Transverse colon (tissue), 4 donors: ENCODE measurements at regions of chr11 and their contacts with region 1.

Region 1: DNA sequence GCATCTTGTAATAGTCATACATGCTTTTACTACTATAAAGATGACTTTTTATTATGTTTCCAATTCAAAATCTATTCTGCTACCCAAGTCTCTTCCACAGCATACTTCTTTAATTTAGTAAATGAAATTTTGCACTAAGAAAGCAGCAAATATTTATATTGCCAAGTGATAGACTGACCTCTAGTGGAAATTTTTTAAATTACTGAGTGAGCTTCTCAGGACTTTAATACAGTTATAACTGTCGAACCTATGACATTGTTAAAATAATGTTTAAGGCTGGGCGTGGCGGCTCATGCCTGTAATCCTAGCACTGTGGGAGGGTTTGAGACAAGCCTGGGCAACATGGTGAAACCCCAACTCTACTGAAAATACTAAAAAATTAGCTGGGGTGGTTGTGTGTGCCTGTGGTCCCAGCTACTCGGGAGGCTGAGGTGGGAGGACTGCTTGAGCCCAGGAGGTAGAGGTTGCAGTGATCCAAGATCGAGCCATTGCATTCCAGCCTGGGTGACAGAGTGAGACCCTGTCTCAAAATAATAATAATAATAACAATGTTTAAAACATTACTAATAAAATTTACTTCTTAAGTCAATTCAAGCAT is 27.3 kb downstream of the STK33 start:
- DNase-seq: peak; percentile 12
- H3K4me3 ChIP-seq: no peak overlapping the region
- H3K27ac ChIP-seq: no peak overlapping the region
- H3K4me1 ChIP-seq: no peaks in the 10 kb centered on the region
- H3K27me3 ChIP-seq: no peaks in the 10 kb centered on the region
- CTCF ChIP-seq: peak; percentile 62 to 78 (median 67)
- EP300 ChIP-seq: no peak
- POLR2A ChIP-seq: no peak

Region 2: DNA sequence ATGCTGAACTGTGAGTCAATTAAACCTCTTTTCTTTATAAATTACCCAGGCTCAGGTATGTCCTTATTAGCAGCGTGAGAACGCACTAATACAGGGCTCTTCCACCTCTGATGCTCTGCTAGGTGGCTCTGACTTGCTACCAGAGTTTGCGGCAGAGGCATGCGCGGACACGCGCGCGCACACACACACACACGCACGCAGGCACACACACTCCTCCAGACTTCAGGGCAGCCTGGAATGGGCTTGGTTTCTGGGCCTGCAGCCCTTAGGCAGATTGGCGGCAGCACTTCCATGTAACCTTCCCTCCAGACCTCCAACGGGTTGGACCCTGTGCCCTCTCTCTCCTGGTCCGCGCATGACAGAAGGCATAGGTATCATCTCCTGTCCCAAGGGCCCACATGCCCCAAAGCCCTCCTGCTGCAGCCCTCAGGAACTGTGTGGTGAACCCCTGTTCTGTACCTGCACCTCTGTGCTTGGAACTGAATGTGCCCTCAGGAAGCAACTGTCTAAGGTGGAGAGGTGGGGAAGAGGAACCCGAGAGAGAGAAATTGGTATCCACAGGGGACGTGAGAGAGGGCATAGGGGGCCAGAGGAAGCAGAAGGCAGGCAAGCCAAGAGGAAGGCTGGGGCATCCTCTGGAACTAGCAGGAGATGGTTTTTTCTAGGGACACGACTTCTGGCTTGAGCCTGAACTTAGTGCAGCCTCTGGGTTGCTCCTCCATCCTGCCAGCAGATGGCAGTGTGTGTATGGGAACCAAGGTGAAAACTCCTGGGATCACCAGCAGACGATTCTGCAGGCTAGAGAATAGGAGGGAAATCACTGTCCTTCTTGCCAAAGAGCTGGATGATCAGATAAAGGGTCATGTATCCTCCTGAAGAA is 374.5 kb before region 1 on chr11:
- in situ Hi-C with region 1: loop called in 1 of 4 experiments (anchors 10 kb)
- intact Hi-C with region 1: no loop called
- DNase-seq: peak; percentile 72
- H3K4me3 ChIP-seq: no peak overlapping the region
- H3K27ac ChIP-seq: no peak overlapping the region
- H3K4me1 ChIP-seq: no peaks in the 10 kb centered on the region
- H3K27me3 ChIP-seq: peaks cover 7% of the 10 kb centered on the region
- CTCF ChIP-seq: peak; percentile 60 to 81 (median 72)
- EP300 ChIP-seq: no peak
- POLR2A ChIP-seq: no peak

Region 3: DNA sequence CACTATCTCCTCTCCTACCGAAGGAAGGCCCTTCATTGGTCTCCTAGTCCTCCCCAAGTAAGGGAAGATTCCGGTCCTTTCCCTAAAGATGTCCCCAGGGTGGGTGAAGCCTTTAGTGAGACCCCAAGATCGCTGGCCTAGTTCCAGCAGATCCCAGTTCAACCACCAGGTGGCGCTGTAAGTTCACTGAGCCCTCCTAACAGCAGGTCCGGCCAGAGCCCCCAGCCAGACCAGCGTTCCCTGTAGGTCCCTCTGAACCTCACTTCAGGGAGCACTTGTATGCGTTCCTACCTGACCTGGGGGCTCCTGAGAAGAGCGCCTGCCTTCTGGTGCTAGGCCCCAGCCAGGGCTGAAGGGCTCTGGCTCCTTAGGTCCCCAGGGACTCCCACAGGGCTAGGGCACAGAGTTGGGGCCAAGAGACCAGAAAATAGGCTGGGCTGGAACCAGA is 341.1 kb before region 1 on chr11:
- in situ Hi-C with region 1: loop called (anchors 10 kb)
- intact Hi-C with region 1: loop called (anchors 2 kb)
- DNase-seq: peak; percentile 73
- H3K4me3 ChIP-seq: no peak overlapping the region
- H3K27ac ChIP-seq: no peak overlapping the region
- H3K4me1 ChIP-seq: peaks cover 0 to 33% (median 18%) of the 10 kb centered on the region in 4 donors
- H3K27me3 ChIP-seq: no peaks in the 10 kb centered on the region
- CTCF ChIP-seq: peak; percentile 91 to 96 (median 93)
- EP300 ChIP-seq: no peak
- POLR2A ChIP-seq: no peak

Region 4: DNA sequence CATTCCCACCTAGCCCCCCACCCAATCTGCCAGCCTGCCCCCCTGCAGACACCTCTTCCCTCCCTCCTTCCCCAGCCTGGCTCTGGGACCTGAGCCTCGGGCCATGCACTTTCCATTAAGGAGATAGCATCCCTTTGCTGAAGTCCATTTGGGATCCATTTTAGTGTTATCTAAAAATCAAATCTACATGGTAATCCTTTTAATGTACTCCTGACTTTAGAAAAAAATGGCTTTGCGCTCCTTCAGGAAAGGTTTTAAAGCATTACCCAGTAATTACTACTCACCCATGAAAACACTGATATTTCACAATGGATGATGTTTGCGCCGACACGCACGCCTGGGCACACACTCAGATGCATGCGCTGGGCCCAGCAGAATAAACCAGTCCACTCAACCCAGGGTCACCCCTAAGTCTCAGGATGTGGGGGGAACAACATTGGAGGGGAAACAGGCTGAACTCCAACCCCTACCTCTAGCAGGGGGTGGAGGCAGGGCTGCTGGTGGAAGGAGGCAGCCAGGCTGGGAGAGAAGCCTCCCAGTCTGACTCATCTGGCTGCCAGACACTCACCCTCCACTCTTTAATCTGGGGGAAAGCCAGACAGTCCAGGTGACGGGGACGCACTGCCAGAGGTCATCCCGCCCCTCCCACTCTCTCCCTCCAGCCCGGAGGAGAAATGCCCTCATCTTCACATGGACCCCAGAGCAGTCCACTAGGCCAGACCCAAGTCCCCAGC is 332.9 kb before region 1 on chr11:
- in situ Hi-C with region 1: loop called (anchors 10 kb)
- intact Hi-C with region 1: no loop called
- DNase-seq: no peak
- H3K4me3 ChIP-seq: no peak overlapping the region
- H3K27ac ChIP-seq: no peak overlapping the region
- H3K4me1 ChIP-seq: peaks cover 0 to 7% (median 2%) of the 10 kb centered on the region in 4 donors
- H3K27me3 ChIP-seq: no peaks in the 10 kb centered on the region
- CTCF ChIP-seq: no peak
- EP300 ChIP-seq: no peak
- POLR2A ChIP-seq: no peak

Region 5: DNA sequence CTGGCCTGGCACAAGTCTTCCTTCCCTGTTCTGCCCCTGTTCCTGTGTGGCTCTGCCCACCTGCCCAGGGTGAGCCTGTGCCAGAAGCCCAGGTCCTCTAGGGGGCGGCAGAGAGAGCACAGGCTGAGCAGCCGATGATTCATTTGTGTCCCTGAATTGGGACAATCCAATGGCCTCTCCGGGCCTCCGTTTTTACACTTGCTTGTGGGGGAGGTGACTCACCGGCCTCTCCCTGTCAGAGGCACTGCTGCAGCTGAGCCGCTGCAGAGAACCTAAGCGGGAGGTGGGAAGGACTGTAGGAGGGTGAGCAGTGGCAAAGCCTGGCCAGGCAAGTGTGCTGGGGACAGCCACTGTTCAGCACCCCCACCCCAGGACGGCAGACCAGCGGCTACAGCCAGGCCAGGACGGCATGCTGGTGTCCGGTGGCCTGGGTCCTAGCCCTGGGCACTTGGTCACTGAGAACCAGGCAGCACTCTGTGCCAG is 237.8 kb before region 1 on chr11:
- in situ Hi-C with region 1: loop called in 2 of 4 experiments (anchors 10 to 25 kb)
- intact Hi-C with region 1: no loop called
- DNase-seq: peak; percentile 85
- H3K4me3 ChIP-seq: no peak overlapping the region
- H3K27ac ChIP-seq: no peak overlapping the region
- H3K4me1 ChIP-seq: peaks cover 0 to 3% (median 0%) of the 10 kb centered on the region in 4 donors
- H3K27me3 ChIP-seq: no peaks in the 10 kb centered on the region
- CTCF ChIP-seq: peak; percentile 51 to 76 (median 70)
- EP300 ChIP-seq: no peak
- POLR2A ChIP-seq: no peak

Region 6: GRCh38 chr11:8338138-8338537 is 228.6 kb before region 1 on chr11:
- in situ Hi-C with region 1: loop called in 2 of 4 experiments (anchors 10 to 25 kb)
- intact Hi-C with region 1: no loop called
- DNase-seq: peak; percentile 61
- H3K4me3 ChIP-seq: no peak overlapping the region
- H3K27ac ChIP-seq: no peak overlapping the region
- H3K4me1 ChIP-seq: no peaks in the 10 kb centered on the region
- H3K27me3 ChIP-seq: peaks cover 8% of the 10 kb centered on the region
- CTCF ChIP-seq: peak; percentile 47 to 66 (median 59)
- EP300 ChIP-seq: no peak
- POLR2A ChIP-seq: no peak

Region 7: GRCh38 chr11:8354622-8355415 is 211.9 kb before region 1 on chr11:
- in situ Hi-C with region 1: loop called in 1 of 4 experiments (anchors 25 kb)
- intact Hi-C with region 1: no loop called
- DNase-seq: no peak
- H3K4me3 ChIP-seq: no peak overlapping the region
- H3K27ac ChIP-seq: peak overlapping the region in 1 of 4 donors; percentile 6
- H3K4me1 ChIP-seq: peaks cover 0 to 8% (median 5%) of the 10 kb centered on the region in 4 donors
- H3K27me3 ChIP-seq: no peaks in the 10 kb centered on the region
- CTCF ChIP-seq: no peak
- EP300 ChIP-seq: no peak
- POLR2A ChIP-seq: no peak